ENCODE measurements at regions of chr4 and their contacts with region 1.

Region 1: GRCh38 chr4:153750197-153750817 is 9.5 kb downstream of the RNF175 start:
- DNase-seq: peak; percentile 76

Region 2: GRCh38 chr4:153634738-153635353 is 115.5 kb before region 1 on chr4:
- CTCF ChIA-PET with region 1: interaction called, 15 read pairs
- POLR2A ChIA-PET with region 1: no interaction called
- DNase-seq: peak; percentile 40

Region 3: GRCh38 chr4:153643406-153644383 is 106.6 kb before region 1 on chr4:
- CTCF ChIA-PET with region 1: interaction called, 12 read pairs
- POLR2A ChIA-PET with region 1: no interaction called
- DNase-seq: peak; percentile 49

Region 4: DNA sequence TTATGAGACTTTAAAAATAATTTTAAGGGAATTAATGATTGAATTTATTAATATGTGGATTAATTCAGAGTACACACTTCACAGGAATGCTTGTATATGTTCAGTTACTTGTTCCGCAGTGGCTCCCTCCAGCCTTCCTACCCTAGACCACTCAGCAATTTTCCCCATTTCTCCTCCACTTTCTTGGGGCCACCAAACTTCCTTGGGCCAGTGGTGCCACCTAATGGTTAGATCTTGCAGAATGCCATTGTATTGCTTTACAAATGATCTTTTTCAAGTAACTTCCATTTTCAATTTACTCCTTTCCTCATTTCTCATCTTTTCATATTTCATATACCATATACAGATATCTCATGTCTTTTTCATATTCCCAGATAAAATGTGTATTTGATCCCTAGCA is 13.1 kb after region 1 on chr4:
- CTCF ChIA-PET with region 1: interaction called, 14 read pairs
- POLR2A ChIA-PET with region 1: no interaction called
- DNase-seq: no peak

Region 5: DNA sequence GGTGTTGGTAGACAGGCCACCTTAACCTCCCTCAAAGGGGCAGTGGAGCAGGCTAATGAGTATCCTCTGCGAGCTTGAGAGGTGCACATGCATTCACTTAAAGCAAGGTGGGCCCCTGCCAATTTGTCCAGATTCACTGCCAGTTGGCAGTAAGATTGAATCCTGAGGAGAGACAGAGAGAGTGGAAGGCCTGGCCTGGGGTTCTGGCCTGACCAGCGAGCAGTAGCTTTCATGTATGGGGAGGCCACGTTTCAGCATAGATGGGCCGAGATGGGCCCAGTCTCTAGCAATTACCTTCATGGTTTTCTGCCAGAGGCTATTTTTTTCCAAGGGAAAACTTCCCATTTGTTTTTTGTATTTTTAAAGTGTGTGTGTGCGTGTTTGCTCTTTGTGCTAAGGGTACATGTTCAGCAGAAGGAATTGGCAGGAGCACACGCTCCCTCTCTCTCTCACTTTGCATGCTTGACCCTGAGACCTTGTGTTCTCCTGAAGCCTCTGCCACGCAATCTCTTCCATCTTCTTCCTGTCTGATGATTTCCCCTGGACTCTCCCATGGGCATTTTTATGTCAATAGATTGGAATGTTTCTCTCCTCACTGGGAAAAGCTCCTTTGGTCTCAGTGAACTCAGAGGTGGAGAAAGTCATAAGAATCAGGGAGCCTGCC is 254.3 kb after region 1 on chr4:
- CTCF ChIA-PET with region 1: no interaction called
- POLR2A ChIA-PET with region 1: no interaction called
- DNase-seq: no peak